ENCODE measurements at regions of chr2 and their contacts with region 1.

Region 1: DNA sequence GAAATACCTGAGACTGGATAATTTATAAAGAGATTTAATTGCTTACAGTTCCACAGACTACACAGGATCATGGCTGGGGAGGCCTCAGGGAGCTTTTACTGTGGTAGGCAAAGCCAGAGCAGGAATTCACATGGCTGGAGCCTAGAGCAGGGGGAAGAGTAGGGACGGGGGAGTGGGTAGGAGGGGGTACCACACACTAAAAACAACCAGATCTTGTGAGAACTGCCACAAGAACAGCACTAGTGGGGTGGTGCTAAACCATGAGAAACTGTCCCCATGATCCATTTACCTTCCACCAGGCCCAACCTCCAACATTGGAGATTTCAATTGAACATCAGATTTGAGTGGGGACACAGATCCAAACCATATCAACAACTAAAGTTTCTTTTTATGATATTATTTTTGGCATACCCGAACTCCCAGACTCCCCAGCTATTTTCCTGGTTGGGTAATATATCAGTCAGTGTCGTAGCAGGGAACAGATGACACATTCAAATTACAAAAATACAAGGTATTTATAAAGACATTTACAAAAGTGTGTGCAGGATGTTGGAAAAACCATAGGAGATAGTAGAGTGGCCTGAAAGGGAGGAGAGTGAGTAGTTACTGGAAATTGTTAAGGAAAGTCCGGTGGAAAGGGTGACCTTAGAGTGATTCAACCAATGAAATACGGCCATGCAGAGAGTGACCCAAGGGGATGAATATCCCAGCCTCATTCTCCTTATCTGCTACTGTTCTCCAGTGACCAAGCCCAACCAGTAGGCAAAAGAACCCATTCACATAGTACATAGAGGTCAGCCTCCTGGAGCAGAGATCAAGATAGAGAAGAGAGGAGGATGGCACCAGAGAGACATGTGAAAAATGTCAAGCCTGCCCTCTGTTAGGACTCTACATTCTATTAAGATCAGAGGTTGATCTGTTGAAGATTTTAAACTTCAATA is 8.8 kb downstream of the RPL37A start:
- DNase-seq: no peak
- CTCF ChIP-seq: no peak

Region 2: DNA sequence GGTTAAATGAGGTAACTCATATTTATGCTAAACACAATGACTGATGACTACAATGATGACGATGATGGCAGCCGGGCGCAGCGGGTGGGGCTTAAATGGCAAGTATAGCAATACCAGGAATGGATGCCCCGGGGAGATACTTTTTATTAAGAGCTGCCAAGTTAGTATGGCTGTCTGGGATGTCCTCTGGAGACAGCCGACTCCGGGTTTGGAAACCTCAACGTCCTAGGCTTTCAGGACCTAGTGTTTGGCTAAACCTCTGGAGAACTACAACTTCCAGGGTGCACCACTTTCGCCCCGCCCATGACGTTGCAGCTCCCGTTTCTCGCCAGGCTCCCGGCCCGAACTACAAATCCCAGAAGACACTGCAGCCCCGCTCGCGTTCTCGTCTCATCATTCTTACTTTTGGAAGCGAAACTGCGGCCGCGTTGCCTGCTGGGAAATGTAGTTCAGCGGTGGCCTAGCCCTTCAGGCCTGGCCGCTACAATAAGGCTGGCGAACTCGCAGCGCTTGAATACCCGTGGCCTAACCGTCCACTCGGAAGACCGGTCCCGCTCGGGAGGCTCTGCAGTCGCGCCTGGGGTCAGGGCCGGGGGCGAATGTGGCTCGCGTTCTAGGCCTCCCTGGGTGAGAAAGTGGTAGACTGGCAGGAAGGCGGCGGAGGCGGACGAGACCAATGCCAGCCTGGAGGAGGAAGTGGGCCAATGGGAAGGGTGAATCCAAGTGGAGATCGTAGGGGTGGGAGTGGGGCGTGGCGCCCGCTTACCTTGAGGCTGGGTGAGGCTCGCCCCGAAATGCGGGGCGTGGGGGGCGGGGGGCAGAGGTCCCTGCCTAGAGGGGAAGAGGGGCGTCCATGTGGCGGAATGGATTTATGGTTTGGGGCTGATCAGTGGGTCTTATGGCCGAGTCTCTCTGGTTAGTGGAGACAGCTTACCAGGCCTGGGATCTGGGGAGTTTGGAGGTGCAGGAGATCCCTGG is 95.2 kb before region 1 on chr2 and contains the start of gene SMARCAL1:
- in situ Hi-C with region 1: no loop called
- DNase-seq: peak; percentile 88
- CTCF ChIP-seq: no peak

Region 3: DNA sequence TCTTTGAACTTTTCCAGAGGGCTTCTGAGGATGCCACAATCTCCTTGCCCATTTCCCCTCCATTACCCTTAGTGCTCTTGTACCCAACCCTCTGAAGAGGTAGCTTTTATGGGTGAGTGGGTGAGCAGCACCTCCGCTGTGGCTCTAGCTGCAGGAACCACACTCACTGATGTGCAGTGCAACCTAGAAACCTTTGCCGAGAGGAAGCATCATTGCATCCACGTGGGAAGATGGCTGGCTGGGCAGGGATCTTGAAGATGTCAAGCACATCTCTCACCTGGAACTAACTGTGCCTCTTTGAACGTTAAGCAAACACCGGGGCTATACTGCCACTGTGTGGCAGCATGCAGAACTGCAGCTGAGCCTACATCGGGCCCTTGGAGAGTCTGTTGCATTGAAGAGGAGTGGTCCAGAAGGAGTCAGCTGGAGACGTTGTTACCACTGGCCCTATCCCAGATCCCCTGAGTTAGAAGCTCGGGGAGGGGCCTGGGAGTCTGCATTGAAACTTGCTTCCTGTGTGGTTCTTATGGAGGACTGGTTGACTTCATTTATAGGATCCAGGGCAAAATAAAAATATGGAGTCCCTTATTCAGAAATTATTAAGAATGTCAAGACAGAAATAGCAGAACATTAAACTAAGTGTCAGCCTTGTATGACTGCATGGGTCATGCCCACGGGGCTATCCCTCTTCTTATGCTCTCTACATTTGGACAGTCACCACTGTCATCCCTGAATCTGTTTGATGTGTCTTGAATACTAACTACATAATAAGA is 159.2 kb after region 1 on chr2:
- in situ Hi-C with region 1: loop called (anchors 5 kb)
- DNase-seq: peak; percentile 85
- CTCF ChIP-seq: peak; percentile 99